Aorta (tissue), 5 donors: ENCODE measurements at regions of chr5 and their contacts with region 1.

Region 1: GRCh38 chr5:159905496-159905895 is 10.8 kb upstream of the ADRA1B start:
- DNase-seq: no peak
- ATAC-seq: no peak
- H3K4me3 ChIP-seq: no peak overlapping the region
- H3K27ac ChIP-seq: no peak overlapping the region
- H3K4me1 ChIP-seq: peaks cover 0 to 4% of the 10 kb centered on the region in 2 donors
- H3K27me3 ChIP-seq: peaks cover 0 to 2% of the 10 kb centered on the region in 2 donors

Region 2: DNA sequence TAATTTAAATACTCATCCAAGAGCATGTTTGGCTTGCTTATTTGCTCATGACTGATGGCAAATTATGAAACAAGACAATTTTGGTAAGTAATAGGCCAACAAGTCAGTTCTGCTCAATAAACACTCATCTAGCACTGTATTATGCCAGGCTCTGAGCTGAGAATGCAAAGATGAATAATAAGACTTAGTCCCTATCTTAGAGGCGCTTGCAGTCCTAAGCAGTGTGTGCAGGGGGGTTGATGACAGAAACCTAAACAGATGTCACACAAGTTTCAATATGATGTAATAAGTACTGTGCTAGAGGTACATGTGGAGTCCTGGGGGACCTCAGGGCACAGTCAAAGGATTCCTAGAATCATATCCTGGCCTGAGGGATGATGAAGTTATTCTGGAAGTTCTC is 276.8 kb before region 1 on chr5:
- intact Hi-C with region 1: no loop called
- DNase-seq: no peak
- ATAC-seq: no peak
- H3K4me3 ChIP-seq: no peak overlapping the region
- H3K27ac ChIP-seq: no peak overlapping the region
- H3K4me1 ChIP-seq: no peaks in the 10 kb centered on the region
- H3K27me3 ChIP-seq: no peaks in the 10 kb centered on the region

Region 3: GRCh38 chr5:159864885-159865691 is 40.4 kb before region 1 on chr5:
- intact Hi-C with region 1: loop called in 1 of 2 experiments (anchors 5 kb)
- DNase-seq: no peak
- ATAC-seq: peak; percentile 6
- H3K4me3 ChIP-seq: peak overlapping the region; percentile 22 to 87
- H3K27ac ChIP-seq: no peak overlapping the region
- H3K4me1 ChIP-seq: peaks cover 0 to 8% of the 10 kb centered on the region in 2 donors
- H3K27me3 ChIP-seq: no peaks in the 10 kb centered on the region